PC-9 (cell line): ENCODE measurements at regions of chr19 and their contacts with region 1.

Region 1: DNA sequence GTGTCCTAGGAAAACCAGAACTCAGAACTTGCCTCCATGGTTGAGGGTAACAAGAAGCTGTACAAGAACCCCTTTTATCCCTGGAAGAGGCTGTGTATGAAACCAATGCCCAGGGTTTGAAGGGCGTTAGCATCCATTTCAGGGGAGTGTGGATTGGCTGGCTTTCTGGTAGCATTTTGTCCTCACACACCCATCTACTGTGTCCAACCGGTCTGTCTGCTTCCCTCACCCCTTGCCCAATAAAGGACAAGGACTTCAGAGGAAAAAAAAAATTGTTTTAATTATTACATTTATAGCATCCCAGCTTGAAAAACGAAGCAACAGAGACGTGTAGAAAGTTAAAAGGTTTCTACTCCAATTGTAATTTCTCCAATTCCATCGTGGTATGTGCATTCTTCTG is 2.7 kb upstream of the CYP4F8 start:
- DNase-seq: peak in 1 of 2 experiments; percentile 56
- H3K4me3 ChIP-seq: no peak overlapping the region
- H3K27ac ChIP-seq: no peak overlapping the region
- H3K4me1 ChIP-seq: peaks cover 30% of the 10 kb centered on the region
- H3K27me3 ChIP-seq: no peaks in the 10 kb centered on the region
- CTCF ChIP-seq: no peak

Region 2: GRCh38 chr19:14629557-14629956 is 982.8 kb before region 1 on chr19:
- CTCF ChIA-PET with region 1: no interaction called
- POLR2A ChIA-PET with region 1: interaction called, 14 read pairs
- intact Hi-C with region 1: no loop called
- DNase-seq: no peak
- H3K4me3 ChIP-seq: no peak overlapping the region
- H3K27ac ChIP-seq: no peak overlapping the region
- H3K4me1 ChIP-seq: no peaks in the 10 kb centered on the region
- H3K27me3 ChIP-seq: peaks cover 18% of the 10 kb centered on the region; the same call in 1 of the 2 replicates
- CTCF ChIP-seq: no peak